H1 (cell line): ENCODE measurements at regions of chr6 and their contacts with region 1.

Region 1: DNA sequence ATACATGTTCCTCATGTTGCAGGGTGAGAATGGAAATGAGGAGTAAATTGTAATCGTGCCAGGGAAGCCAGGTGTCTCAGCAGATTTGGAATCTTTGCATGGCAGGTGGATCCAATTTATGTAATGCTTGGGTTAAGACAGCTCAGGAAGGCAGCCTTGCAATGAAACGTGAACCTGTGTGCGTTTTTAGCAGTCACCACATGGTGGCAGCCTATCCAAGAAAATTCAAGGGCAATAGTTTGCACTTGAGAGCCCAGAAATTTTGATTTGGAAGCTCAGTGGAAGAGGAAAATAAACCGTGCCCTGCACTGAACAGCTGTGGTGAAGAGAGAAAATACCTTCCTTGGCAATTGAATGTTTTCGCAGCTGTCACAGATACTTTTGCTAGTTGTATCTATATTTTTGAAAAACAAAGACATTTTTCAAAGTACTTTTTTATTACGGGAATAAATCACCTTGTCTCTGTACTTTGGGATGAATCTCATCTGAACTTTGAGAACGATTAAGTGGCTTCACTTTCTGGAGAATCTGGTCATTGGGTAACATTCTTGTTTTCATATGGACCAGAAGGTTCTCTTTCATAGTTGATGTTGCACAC is 26.5 kb downstream of the MTHFD1L start:
- DNase-seq: peak; percentile 50 to 83
- H3K4me3 ChIP-seq: no peak overlapping the region
- H3K27ac ChIP-seq: no peak overlapping the region
- H3K4me1 ChIP-seq: peaks cover 0 to 3% (median 0%) of the 10 kb centered on the region in 4 experiments; a peak in 1 of 7 replicates
- H3K27me3 ChIP-seq: no peaks in the 10 kb centered on the region
- CTCF ChIP-seq: peak; percentile 51 to 90 (median 73)
- EP300 ChIP-seq: no peak
- POLR2A ChIP-seq: no peak
- RAD21 ChIP-seq: peak; percentile 81

Region 2: GRCh38 chr6:150767571-150768018 is 124.4 kb before region 1 on chr6:
- CTCF ChIA-PET with region 1: no interaction called
- POLR2A ChIA-PET with region 1: no interaction called
- DNase-seq: no peak
- H3K4me3 ChIP-seq: no peak overlapping the region
- H3K27ac ChIP-seq: no peak overlapping the region; the same call in 1 of the 2 replicates
- H3K4me1 ChIP-seq: peaks cover 0 to 6% (median 2%) of the 10 kb centered on the region in 4 experiments; a peak in 2 of 7 replicates
- H3K27me3 ChIP-seq: no peaks in the 10 kb centered on the region
- CTCF ChIP-seq: no peak
- EP300 ChIP-seq: no peak
- POLR2A ChIP-seq: no peak
- RAD21 ChIP-seq: no peak

Region 3: GRCh38 chr6:150876598-150876997 is 15.4 kb before region 1 on chr6:
- CTCF ChIA-PET with region 1: interaction called, 21 read pairs
- POLR2A ChIA-PET with region 1: interaction called, 7 read pairs
- DNase-seq: no peak
- H3K4me3 ChIP-seq: no peak overlapping the region
- H3K27ac ChIP-seq: no peak overlapping the region
- H3K4me1 ChIP-seq: peaks cover 2 to 21% (median 11%) of the 10 kb centered on the region in 4 experiments; a peak in 6 of 7 replicates
- H3K27me3 ChIP-seq: no peaks in the 10 kb centered on the region
- CTCF ChIP-seq: no peak
- EP300 ChIP-seq: no peak
- POLR2A ChIP-seq: no peak
- RAD21 ChIP-seq: no peak

Region 4: DNA sequence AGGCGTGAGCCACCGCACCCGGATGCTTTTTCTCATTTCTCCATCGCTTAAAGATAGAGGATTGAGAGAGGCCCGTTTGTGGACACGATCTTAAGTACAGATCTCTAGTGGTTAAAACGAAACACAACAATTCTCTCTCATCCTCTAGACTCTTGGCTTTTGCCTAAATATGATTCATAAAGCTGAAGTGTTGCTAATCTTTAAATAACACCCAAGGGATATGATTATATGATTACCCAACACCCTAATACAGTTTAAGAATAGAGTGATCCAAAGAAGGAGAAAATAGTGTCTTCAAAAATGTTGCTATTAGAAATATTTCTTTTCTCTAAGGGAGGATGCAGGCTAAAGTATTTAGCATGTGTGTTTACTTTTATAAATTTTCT is 23.9 kb after region 1 on chr6:
- CTCF ChIA-PET with region 1: interaction called, 78 read pairs
- POLR2A ChIA-PET with region 1: no interaction called
- DNase-seq: no peak
- H3K4me3 ChIP-seq: no peak overlapping the region
- H3K27ac ChIP-seq: no peak overlapping the region
- H3K4me1 ChIP-seq: no peaks in the 10 kb centered on the region
- H3K27me3 ChIP-seq: no peaks in the 10 kb centered on the region
- CTCF ChIP-seq: no peak
- EP300 ChIP-seq: no peak
- POLR2A ChIP-seq: no peak
- RAD21 ChIP-seq: no peak

Region 5: GRCh38 chr6:150928882-150929281 is 36.9 kb after region 1 on chr6:
- CTCF ChIA-PET with region 1: interaction called, 21 read pairs
- POLR2A ChIA-PET with region 1: interaction called, 3 read pairs
- DNase-seq: no peak
- H3K4me3 ChIP-seq: no peak overlapping the region
- H3K27ac ChIP-seq: no peak overlapping the region
- H3K4me1 ChIP-seq: no peaks in the 10 kb centered on the region
- H3K27me3 ChIP-seq: no peaks in the 10 kb centered on the region
- CTCF ChIP-seq: peak; percentile 46 to 73 (median 68)
- EP300 ChIP-seq: no peak
- POLR2A ChIP-seq: no peak
- RAD21 ChIP-seq: peak; percentile 13 to 34; a peak in 2 of 4 replicates

Region 6: DNA sequence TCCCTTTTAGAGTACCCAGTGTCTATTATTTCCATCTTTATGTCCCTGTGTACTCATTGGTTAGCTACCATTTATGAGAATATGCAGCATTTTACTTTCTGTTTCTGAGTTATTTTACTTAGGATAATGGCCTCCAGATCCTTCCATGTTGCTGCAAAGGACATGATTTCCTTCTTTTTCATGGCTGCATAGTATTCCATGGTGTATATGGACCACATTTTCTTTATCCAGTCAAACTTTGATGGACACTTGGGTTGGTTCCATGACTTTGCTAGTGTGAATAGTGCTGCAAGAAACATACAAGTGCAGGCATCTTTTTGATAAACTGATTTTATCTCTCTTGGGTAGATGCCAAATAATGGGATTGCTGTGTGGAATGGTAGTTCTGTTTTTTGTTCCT is 443.9 kb after region 1 on chr6:
- CTCF ChIA-PET with region 1: interaction called, 26 read pairs
- POLR2A ChIA-PET with region 1: no interaction called
- DNase-seq: no peak
- H3K4me3 ChIP-seq: no peak overlapping the region
- H3K27ac ChIP-seq: no peak overlapping the region
- H3K4me1 ChIP-seq: 0 out of 7 replicates have a peak, but pooled peaks cover 0 to 2% (median 0%) of the 10 kb centered on the region in 4 experiments
- H3K27me3 ChIP-seq: no peaks in the 10 kb centered on the region
- CTCF ChIP-seq: no peak
- EP300 ChIP-seq: no peak
- POLR2A ChIP-seq: no peak
- RAD21 ChIP-seq: no peak